ENCODE measurements at regions of chr4 and their contacts with region 1.

Region 1: GRCh38 chr4:129377131-129377845 is 281.3 kb downstream of the C4orf33 start:
- DNase-seq: peak; percentile 69
- H3K4me3 ChIP-seq: no peak overlapping the region
- H3K27ac ChIP-seq: no peak overlapping the region
- H3K4me1 ChIP-seq: peaks cover 13% of the 10 kb centered on the region
- H3K27me3 ChIP-seq: no peaks in the 10 kb centered on the region
- CTCF ChIP-seq: no peak
- POLR2A ChIP-seq: no peak

Region 2: GRCh38 chr4:129208481-129208880 is 168.8 kb before region 1 on chr4:
- CTCF ChIA-PET with region 1: no interaction called
- POLR2A ChIA-PET with region 1: no interaction called
- dilution Hi-C with region 1: no loop called
- intact Hi-C with region 1: no loop called
- DNase-seq: no peak
- H3K4me3 ChIP-seq: no peak overlapping the region
- H3K27ac ChIP-seq: no peak overlapping the region
- H3K4me1 ChIP-seq: no peaks in the 10 kb centered on the region
- H3K27me3 ChIP-seq: no peaks in the 10 kb centered on the region
- CTCF ChIP-seq: no peak
- POLR2A ChIP-seq: no peak

Region 3: DNA sequence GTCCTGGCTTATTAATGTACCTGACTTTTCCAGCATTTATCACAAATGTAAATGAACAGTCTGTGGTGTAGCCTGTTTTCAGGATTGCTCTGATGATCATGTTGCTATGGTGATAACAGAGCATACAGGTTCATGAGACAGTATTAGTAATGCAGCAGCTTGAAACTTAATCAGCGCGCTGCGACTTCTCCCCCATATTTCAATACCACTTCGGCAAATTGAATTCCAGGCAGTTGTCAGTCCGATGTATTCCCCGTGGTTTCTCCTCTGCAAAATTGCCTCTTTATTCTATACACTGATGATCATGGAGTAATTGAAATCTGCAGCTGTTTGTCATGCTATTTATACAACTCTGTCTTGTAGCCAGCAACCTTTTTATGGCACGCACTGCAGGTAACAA is 42.0 kb before region 1 on chr4:
- CTCF ChIA-PET with region 1: no interaction called
- POLR2A ChIA-PET with region 1: no interaction called
- dilution Hi-C with region 1: no loop called
- intact Hi-C with region 1: no loop called
- DNase-seq: no peak
- H3K4me3 ChIP-seq: no peak overlapping the region
- H3K27ac ChIP-seq: no peak overlapping the region
- H3K4me1 ChIP-seq: no peaks in the 10 kb centered on the region
- H3K27me3 ChIP-seq: peaks cover 0 to 2% of the 10 kb centered on the region in 2 experiments
- CTCF ChIP-seq: no peak
- POLR2A ChIP-seq: no peak

Region 4: DNA sequence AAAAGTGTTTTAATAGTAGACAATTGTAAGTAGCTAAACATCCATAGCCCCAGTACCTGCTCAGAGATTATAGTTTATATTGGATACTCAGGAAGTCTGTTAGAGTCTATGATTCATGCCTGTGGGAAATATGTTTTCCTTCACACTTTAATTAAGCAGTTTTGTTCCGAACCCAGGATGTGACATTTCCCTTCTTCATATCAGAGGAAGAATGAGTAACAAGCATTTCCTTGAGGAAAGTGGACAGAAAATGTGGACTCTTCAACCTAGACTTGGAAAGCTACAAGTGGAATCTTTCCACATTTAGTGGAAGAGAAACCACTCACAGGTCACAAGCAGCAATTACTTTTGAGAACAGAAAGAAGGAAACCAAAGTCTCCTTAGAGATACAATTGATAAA is 138.1 kb after region 1 on chr4:
- CTCF ChIA-PET with region 1: no interaction called
- POLR2A ChIA-PET with region 1: no interaction called
- dilution Hi-C with region 1: no loop called
- intact Hi-C with region 1: loop called (anchors 2 kb)
- DNase-seq: peak; percentile 90
- H3K4me3 ChIP-seq: no peak overlapping the region
- H3K27ac ChIP-seq: peak overlapping the region; percentile 66
- H3K4me1 ChIP-seq: peaks cover 22% of the 10 kb centered on the region
- H3K27me3 ChIP-seq: no peaks in the 10 kb centered on the region
- CTCF ChIP-seq: no peak
- POLR2A ChIP-seq: peak; percentile 15

Measured in endothelial cell of umbilical vein (primary cell).